Breast epithelium (tissue), 4 donors: ENCODE measurements at regions of chr7 and their contacts with region 1.

Region 1: DNA sequence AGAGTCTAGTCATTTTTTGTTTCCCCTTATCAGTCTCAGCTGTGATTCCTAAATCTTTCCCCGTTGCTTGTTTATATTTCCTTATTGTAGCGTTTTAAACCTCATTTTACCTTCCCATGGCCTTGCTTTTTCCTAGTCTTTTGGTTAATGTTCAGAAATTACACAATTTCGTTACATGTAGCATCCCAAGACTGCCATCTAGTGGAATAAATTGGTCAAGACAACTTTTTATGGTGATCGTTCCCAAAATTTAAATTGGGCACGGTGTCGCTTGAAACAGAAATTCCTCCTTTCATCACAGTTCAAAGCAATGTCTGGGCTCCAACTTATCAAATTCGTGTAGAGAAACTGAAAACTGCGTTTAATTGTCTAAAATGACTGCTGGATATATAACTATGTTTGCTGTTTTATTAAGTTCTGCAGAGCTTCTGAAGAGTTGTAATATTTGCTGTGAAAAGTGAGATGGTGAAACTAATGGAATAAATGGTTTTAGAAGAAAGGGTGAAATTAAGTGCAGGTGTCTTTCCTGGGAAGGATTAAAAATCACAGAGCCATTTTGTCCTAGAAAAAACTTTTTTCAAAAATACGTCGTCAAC is 370.2 kb downstream of the PHF14 start:
- DNase-seq: no peak
- H3K4me3 ChIP-seq: no peak overlapping the region
- H3K27ac ChIP-seq: no peak overlapping the region
- H3K4me1 ChIP-seq: no peaks in the 10 kb centered on the region
- H3K27me3 ChIP-seq: no peaks in the 10 kb centered on the region
- CTCF ChIP-seq: peak; percentile 27 to 71 (median 66)
- POLR2A ChIP-seq: no peak

Region 2: GRCh38 chr7:12357508-12357907 is 1013.6 kb after region 1 on chr7:
- intact Hi-C with region 1: loop called (anchors 10 kb)
- DNase-seq: no peak
- H3K4me3 ChIP-seq: no peak overlapping the region
- H3K27ac ChIP-seq: no peak overlapping the region
- H3K4me1 ChIP-seq: no peaks in the 10 kb centered on the region
- H3K27me3 ChIP-seq: no peaks in the 10 kb centered on the region
- CTCF ChIP-seq: no peak
- POLR2A ChIP-seq: no peak